ENCODE measurements at regions of chr2 and their contacts with region 1.

Region 1: GRCh38 chr2:73085691-73086360 is 14.3 kb upstream of the SFXN5 start:
- DNase-seq: no peak
- H3K4me3 ChIP-seq: no peak overlapping the region; the same call in 1 of the 2 replicates
- CTCF ChIP-seq: peak; percentile 96

Region 2: GRCh38 chr2:73063909-73064875 is 21.6 kb before region 1 on chr2:
- CTCF ChIA-PET with region 1: interaction called, 28 read pairs
- POLR2A ChIA-PET with region 1: interaction called, 3 read pairs
- DNase-seq: peak; percentile 31
- H3K4me3 ChIP-seq: no peak overlapping the region
- CTCF ChIP-seq: no peak

Region 3: DNA sequence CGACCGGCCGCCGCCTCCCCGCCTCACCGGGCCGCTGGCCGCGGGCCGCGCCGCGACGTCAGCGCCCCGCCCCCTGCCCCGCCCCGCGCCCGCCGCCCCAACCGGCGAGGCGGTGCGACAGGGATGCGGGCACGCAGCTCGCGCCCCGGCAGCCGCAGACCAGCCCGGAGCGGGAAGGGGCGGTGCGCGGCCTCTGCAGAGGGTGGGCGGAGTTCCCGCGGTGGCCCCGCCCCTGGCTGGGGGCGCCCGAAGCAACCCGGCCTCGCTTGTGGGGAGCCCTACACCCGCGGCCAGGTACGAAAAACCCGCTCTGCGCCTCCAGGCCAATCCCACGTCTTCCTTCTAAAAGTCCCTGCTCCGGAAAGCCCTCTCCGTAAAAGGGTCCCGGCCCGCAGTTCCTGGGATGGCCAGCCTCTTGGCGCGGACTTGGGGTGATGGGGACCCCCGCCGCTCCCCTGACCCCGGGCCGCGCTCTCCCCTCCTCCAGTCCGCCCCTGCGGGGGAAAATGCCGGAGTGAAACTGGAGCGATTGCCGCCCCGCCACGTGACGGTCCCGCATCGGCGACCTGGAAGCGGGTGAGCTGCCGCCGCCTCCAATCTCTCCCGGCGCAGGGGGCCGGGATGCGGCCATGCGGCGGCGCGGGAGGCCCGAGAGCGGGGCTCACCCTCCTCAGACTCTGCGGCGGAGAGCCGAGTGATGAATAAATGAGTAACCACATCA is 27.2 kb after region 1 on chr2 and contains the start of gene RAB11FIP5:
- CTCF ChIA-PET with region 1: interaction called, 85 read pairs
- POLR2A ChIA-PET with region 1: interaction called, 12 read pairs
- DNase-seq: no peak
- H3K4me3 ChIP-seq: peak within 1 kb of the TSS; percentile 83
- CTCF ChIP-seq: no peak

Region 4: GRCh38 chr2:73134471-73134870 is 48.6 kb after region 1 on chr2:
- CTCF ChIA-PET with region 1: interaction called, 13 read pairs
- POLR2A ChIA-PET with region 1: no interaction called
- DNase-seq: no peak
- H3K4me3 ChIP-seq: no peak overlapping the region
- CTCF ChIP-seq: no peak

Region 5: DNA sequence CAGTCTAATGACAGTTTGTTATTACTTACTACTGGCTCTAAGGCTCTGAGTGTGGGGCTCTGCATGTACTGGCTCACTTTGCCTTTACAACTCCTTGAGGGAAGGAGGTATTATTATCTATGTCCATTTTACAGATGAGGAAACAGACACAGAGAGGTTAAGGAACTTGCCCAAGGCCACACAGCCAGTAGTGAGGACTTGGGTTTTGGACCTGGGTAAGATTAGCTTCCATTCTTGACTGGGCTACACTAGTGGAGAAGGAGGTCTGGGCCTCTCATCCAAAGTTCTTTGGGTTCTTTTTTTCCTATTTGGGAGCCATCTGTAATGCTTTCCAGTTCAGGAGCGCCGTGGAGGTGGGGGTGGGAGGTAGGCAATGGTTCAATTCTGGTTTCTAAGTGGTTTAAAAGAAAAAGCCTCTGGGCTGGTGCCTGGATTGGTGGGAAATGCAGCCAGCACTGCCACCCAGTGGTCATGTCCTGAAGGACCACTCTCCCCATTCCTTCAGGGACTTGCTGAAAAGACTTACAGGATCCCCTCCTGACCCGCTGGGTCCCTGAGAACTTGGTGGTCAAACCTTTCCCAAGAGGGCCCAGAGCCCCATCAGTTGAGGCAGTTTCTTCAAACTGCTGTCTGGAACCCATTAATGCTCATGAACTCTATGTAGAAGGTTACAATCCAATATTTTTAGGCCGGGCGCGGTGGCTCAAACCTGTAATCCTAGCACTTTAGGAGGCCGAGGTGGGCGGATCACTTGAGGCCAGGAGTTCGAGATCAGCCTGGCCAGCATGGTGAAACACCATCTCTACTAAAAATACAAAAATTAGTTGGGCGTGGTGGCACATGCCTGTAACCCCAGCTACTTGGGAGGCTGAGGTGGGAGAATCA is 77.9 kb after region 1 on chr2:
- CTCF ChIA-PET with region 1: interaction called, 502 read pairs
- POLR2A ChIA-PET with region 1: no interaction called
- DNase-seq: no peak
- H3K4me3 ChIP-seq: no peak overlapping the region
- CTCF ChIP-seq: peak; percentile 87

Measured in AG04449 (cell line).